IMR-90 (cell line): ENCODE measurements at regions of chr17 and their contacts with region 1.

Region 1: GRCh38 chr17:67993596-67994361 is 2.5 kb downstream of the C17orf58 start:
- DNase-seq: peak; percentile 84
- ATAC-seq: peak; percentile 84
- H3K4me3 ChIP-seq: peak overlapping the region; percentile 72
- H3K27ac ChIP-seq: peak overlapping the region; percentile 92
- H3K4me1 ChIP-seq: peaks cover 5% of the 10 kb centered on the region; the same call in 1 of the 2 replicates
- H3K27me3 ChIP-seq: no peaks in the 10 kb centered on the region
- CTCF ChIP-seq: no peak
- POLR2A ChIP-seq: no peak; the same call in 1 of the 2 replicates
- RAD21 ChIP-seq: no peak

Region 2: DNA sequence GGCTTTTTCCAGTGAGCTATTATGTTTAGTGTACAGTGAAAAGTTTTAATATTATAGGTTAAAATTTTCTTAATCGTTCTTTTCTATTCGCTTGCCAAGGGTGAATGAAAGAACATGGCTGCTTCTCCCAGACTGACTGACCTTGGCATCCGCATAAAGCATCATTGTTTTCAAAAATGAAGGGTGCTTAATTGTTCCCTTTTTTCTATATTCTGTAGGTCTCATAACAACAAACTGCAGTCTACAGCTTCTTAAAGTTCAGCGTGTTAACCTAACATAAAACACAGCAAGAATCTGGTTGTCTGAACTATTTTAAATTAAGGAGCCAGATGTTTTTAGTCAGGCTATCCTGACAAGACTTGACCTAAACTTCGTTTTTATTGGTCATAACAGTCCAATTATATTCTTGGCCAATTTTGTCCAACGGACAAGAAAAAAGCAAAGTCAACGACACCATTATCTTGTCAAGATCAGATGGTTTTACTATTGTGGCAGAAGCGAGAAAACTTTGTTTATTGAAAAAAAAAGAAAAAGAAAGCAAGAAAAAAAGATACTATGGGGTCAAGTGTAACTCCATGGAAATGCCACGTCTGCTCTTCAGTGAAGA is 11.6 kb before region 1 on chr17:
- CTCF ChIA-PET with region 1: no interaction called
- POLR2A ChIA-PET with region 1: no interaction called
- dilution Hi-C with region 1: no loop called
- in situ Hi-C with region 1: no loop called
- intact Hi-C with region 1: loop called (anchors 1 kb)
- DNase-seq: no peak
- ATAC-seq: no peak
- H3K4me3 ChIP-seq: no peak overlapping the region
- H3K27ac ChIP-seq: no peak overlapping the region
- H3K4me1 ChIP-seq: peaks cover 2% of the 10 kb centered on the region
- H3K27me3 ChIP-seq: no peaks in the 10 kb centered on the region
- CTCF ChIP-seq: no peak
- POLR2A ChIP-seq: no peak
- RAD21 ChIP-seq: no peak

Region 3: DNA sequence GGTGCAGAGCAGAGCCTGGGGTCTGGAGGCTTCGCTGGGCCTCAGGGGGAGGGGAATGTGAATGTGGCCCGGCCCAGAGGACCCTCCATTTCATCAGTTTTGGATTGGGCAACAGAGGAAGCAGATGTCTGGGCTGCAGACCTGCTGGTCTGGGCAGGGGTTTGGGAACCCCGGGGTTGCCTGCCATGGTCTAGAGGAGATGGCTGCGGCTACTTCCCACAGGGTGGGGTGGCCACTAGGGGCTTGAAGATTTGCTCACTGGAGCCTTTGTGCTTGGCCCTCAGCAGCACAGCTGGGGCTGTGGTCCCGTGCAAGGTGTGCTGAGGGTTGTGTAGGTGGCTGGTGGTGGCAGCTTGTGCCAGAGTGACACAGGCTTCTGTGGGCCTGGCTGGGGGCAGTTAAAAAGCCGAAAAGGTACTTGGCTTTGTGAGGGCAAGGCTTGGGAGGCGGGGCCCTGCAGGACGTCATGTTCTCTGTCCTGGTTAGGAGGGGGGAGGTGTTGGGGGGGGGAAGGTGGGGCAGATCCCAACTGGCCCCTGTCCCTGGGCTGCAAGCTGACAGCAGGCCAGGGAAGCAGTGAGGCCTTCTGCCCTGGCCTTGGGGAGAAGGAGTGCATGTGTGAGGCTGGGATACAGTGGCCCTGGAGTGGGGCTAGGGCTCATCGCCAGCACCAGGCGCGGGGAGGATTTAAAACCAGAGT is 139.7 kb after region 1 on chr17:
- CTCF ChIA-PET with region 1: no interaction called
- POLR2A ChIA-PET with region 1: no interaction called
- dilution Hi-C with region 1: no loop called
- in situ Hi-C with region 1: no loop called
- intact Hi-C with region 1: no loop called
- DNase-seq: no peak
- ATAC-seq: no peak
- H3K4me3 ChIP-seq: no peak overlapping the region
- H3K27ac ChIP-seq: no peak overlapping the region
- H3K4me1 ChIP-seq: no peaks in the 10 kb centered on the region
- H3K27me3 ChIP-seq: no peaks in the 10 kb centered on the region
- CTCF ChIP-seq: no peak
- POLR2A ChIP-seq: no peak
- RAD21 ChIP-seq: no peak